Heart right ventricle (tissue), 16 donors: ENCODE measurements at regions of chr20 and their contacts with region 1.

Region 1: GRCh38 chr20:47629907-47630306 is 128.2 kb downstream of the NCOA3 start:
- DNase-seq: no peak
- ATAC-seq: no peak
- H3K4me3 ChIP-seq: no peak overlapping the region
- H3K27ac ChIP-seq: no peak overlapping the region
- H3K4me1 ChIP-seq: peaks cover 0 to 8% (median 0%) of the 10 kb centered on the region in 9 donors
- H3K27me3 ChIP-seq: no peaks in the 10 kb centered on the region
- CTCF ChIP-seq: no peak

Region 2: DNA sequence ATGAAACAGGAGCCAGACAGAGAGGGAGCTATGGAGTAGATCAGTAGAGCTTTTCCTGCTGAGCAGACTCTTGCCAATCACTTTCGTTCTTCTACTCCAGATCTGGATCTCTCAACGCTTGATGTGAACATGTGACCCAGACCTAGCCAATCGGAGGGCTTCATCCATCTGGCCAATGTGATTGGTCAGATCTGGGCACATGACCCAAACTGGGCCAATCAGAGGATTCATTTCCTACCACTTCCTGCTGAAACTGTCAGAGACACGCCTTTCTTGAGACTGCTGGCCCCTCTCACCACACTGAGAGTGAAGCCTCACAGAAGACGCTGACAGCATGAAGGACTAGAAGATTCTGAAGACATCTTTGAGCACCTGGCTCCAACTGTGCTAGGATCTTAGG is 229.2 kb before region 1 on chr20:
- intact Hi-C with region 1: loop called in 1 of 10 experiments (anchors 5 kb)
- DNase-seq: no peak
- ATAC-seq: no peak
- H3K4me3 ChIP-seq: no peak overlapping the region
- H3K27ac ChIP-seq: no peak overlapping the region
- H3K4me1 ChIP-seq: peaks cover 0 to 11% (median 0%) of the 10 kb centered on the region in 9 donors
- H3K27me3 ChIP-seq: no peaks in the 10 kb centered on the region
- CTCF ChIP-seq: no peak

Region 3: DNA sequence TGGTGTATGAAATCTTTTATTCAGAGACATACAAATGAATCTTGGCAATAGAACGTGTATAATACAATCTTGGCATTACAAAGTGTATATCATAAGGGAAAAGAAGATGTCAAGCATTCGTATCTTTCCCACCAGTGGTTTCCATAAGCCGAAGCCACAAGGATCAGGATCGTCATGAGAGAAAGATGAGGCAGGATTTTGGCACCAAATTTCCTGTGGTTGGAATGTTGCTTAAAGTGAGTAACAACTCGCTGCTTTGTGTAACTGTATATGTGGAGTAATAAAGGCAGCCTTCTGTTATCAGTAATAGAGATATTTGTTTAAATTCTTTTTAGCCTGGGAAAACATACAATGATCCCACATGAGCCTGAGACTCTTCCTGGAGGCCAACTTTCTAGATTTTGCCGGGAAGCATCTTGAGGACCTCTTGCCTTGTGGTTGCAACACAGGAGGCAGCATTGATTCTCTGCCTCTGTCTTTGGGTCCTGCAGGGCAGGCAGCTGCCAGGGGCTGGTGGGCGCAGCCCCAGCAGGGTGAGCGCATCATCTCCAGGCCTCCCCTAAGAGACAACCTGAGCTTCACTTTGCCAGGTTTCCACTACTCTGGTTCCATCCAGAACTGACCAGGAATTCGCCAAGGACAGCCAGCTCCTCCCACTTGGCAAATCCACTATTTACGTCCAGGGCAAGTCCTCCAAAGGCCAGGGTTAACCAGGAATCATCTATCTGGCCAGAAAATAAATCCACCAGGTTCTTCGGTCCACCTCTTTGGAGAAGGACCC is 386.2 kb after region 1 on chr20:
- intact Hi-C with region 1: no loop called
- DNase-seq: no peak
- ATAC-seq: no peak
- H3K4me3 ChIP-seq: no peak overlapping the region
- H3K27ac ChIP-seq: peak overlapping the region in 1 of 10 donors; percentile 50
- H3K4me1 ChIP-seq: peaks cover 0 to 7% (median 5%) of the 10 kb centered on the region in 9 donors
- H3K27me3 ChIP-seq: peaks cover 0 to 22% (median 10%) of the 10 kb centered on the region in 7 donors
- CTCF ChIP-seq: no peak